ENCODE measurements at regions of chr19 and their contacts with region 1.

Region 1: GRCh38 chr19:43743022-43743421 is 11.7 kb downstream of the SMG9 start:
- DNase-seq: no peak
- H3K4me3 ChIP-seq: no peak overlapping the region
- H3K27ac ChIP-seq: no peak overlapping the region
- H3K4me1 ChIP-seq: no peaks in the 10 kb centered on the region
- H3K27me3 ChIP-seq: no peaks in the 10 kb centered on the region
- CTCF ChIP-seq: no peak

Region 2: DNA sequence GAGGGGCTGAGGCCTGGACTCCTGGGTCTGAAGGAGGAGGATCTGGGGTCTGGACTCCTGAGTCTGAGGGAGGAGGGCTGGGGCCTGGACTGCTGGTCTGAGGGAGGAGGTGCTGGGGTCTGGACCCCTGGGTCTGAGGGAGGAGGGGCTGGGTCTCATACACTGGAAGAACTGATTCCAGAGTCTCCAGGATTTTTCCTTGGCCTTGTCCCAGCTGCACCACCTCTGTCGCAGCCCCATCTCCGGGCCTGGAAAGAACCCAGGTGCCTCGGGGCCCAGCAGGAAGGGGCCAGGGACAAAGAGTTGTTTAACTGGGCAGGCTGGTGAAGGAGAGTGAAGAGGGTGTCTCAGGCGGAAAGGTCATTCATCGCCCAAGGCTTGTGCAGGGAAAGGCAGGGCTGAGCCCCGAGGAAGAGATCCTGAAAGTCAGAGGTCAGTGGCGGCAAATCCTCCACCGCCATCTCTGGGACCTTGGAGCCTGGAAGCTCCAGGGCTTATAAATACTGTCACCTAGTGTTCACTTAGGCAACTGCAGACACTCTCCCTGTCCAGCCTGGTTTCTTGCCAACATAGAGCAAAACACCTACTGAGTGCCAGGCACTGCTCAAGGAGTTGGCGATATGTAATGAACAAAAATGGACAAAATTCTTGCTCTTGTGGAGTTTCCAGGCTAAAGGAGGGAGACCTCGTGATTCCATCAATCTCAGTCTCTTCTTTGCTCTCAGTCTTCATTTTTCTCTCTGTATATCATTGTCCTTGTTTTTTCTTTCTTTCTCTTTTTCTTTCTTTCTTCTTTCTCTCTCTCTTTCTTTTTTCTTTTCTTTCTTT is 42.2 kb after region 1 on chr19:
- CTCF ChIA-PET with region 1: interaction called, 9 read pairs
- POLR2A ChIA-PET with region 1: no interaction called
- intact Hi-C with region 1: loop called (anchors 1 kb)
- DNase-seq: peak; percentile 70
- H3K4me3 ChIP-seq: no peak overlapping the region
- H3K27ac ChIP-seq: no peak overlapping the region
- H3K4me1 ChIP-seq: no peaks in the 10 kb centered on the region
- H3K27me3 ChIP-seq: no peaks in the 10 kb centered on the region
- CTCF ChIP-seq: peak; percentile 93

Region 3: GRCh38 chr19:43809762-43810696 is 67.0 kb after region 1 on chr19:
- CTCF ChIA-PET with region 1: interaction called, 18 read pairs
- POLR2A ChIA-PET with region 1: interaction called, 4 read pairs
- intact Hi-C with region 1: no loop called
- DNase-seq: peak; percentile 73
- H3K4me3 ChIP-seq: no peak overlapping the region
- H3K27ac ChIP-seq: no peak overlapping the region
- H3K4me1 ChIP-seq: no peaks in the 10 kb centered on the region
- H3K27me3 ChIP-seq: no peaks in the 10 kb centered on the region
- CTCF ChIP-seq: peak; percentile 71